H1 (cell line): ENCODE measurements at regions of chr7 and their contacts with region 1.

Region 1: GRCh38 chr7:141654551-141654950 is 47.4 kb downstream of the DENND11 start:
- DNase-seq: peak in 1 of 2 experiments; percentile 46
- H3K4me3 ChIP-seq: no peak overlapping the region
- H3K27ac ChIP-seq: no peak overlapping the region
- H3K4me1 ChIP-seq: peaks cover 0 to 4% (median under 1%) of the 10 kb centered on the region in 4 experiments; a peak in 4 of 7 replicates
- H3K27me3 ChIP-seq: no peaks in the 10 kb centered on the region
- CTCF ChIP-seq: peak; percentile 55 to 89 (median 77)
- EP300 ChIP-seq: no peak
- POLR2A ChIP-seq: no peak
- RAD21 ChIP-seq: peak; percentile 78 to 84

Region 2: GRCh38 chr7:141276031-141276430 is 378.5 kb before region 1 on chr7:
- CTCF ChIA-PET with region 1: interaction called, 15 read pairs
- POLR2A ChIA-PET with region 1: no interaction called
- DNase-seq: no peak
- H3K4me3 ChIP-seq: no peak overlapping the region
- H3K27ac ChIP-seq: no peak overlapping the region
- H3K4me1 ChIP-seq: no peaks in the 10 kb centered on the region; a peak in 1 of 7 replicates
- H3K27me3 ChIP-seq: no peaks in the 10 kb centered on the region
- CTCF ChIP-seq: no peak
- EP300 ChIP-seq: no peak
- POLR2A ChIP-seq: no peak
- RAD21 ChIP-seq: no peak

Region 3: GRCh38 chr7:141533149-141533949 is 121.2 kb before region 1 on chr7:
- CTCF ChIA-PET with region 1: interaction called, 54 read pairs
- POLR2A ChIA-PET with region 1: no interaction called
- DNase-seq: peak in 1 of 2 experiments; percentile 79
- H3K4me3 ChIP-seq: no peak overlapping the region
- H3K27ac ChIP-seq: no peak overlapping the region; the same call in 1 of the 2 replicates
- H3K4me1 ChIP-seq: no peaks in the 10 kb centered on the region
- H3K27me3 ChIP-seq: no peaks in the 10 kb centered on the region
- CTCF ChIP-seq: peak; percentile 76 to 93 (median 88)
- EP300 ChIP-seq: no peak
- POLR2A ChIP-seq: no peak
- RAD21 ChIP-seq: peak; percentile 97 to 98

Region 4: GRCh38 chr7:141541375-141541774 is 113.2 kb before region 1 on chr7:
- CTCF ChIA-PET with region 1: interaction called, 54 read pairs
- POLR2A ChIA-PET with region 1: no interaction called
- DNase-seq: no peak
- H3K4me3 ChIP-seq: no peak overlapping the region
- H3K27ac ChIP-seq: no peak overlapping the region
- H3K4me1 ChIP-seq: peaks cover 0 to 8% (median 4%) of the 10 kb centered on the region in 4 experiments; a peak in 4 of 7 replicates
- H3K27me3 ChIP-seq: no peaks in the 10 kb centered on the region
- CTCF ChIP-seq: no peak
- EP300 ChIP-seq: no peak
- POLR2A ChIP-seq: no peak
- RAD21 ChIP-seq: no peak

Region 5: GRCh38 chr7:141551094-141551781 is 103.3 kb before region 1 on chr7 and contains the start of gene AGK:
- CTCF ChIA-PET with region 1: interaction called, 19 read pairs
- POLR2A ChIA-PET with region 1: interaction called, 4 read pairs
- DNase-seq: peak; percentile 43 to 88
- H3K4me3 ChIP-seq: peak within 1 kb of the TSS; percentile 63 to 86 (median 72)
- H3K27ac ChIP-seq: peak within 1 kb of the TSS; percentile 3; the same call in 1 of the 2 replicates
- H3K4me1 ChIP-seq: peaks cover 3 to 5% (median 5%) of the 10 kb centered on the region in 4 experiments; a peak in 6 of 7 replicates
- H3K27me3 ChIP-seq: no peaks in the 10 kb centered on the region
- CTCF ChIP-seq: no peak
- EP300 ChIP-seq: peak in 1 of 2 experiments; percentile 78; a peak in 1 of 3 replicates
- POLR2A ChIP-seq: peak; percentile 53 to 89
- RAD21 ChIP-seq: no peak; a peak in 1 of 4 replicates
- total RNA-seq, gene AGK: 30.0 and 34.0 TPM in 2 replicates

Region 6: GRCh38 chr7:141674702-141675101 is 20.2 kb after region 1 on chr7:
- CTCF ChIA-PET with region 1: interaction called, 51 read pairs
- POLR2A ChIA-PET with region 1: interaction called, 3 read pairs
- DNase-seq: peak; percentile 39 to 71
- H3K4me3 ChIP-seq: no peak overlapping the region
- H3K27ac ChIP-seq: no peak overlapping the region
- H3K4me1 ChIP-seq: no peaks in the 10 kb centered on the region; a peak in 1 of 7 replicates
- H3K27me3 ChIP-seq: no peaks in the 10 kb centered on the region
- CTCF ChIP-seq: peak; percentile 74 to 82 (median 76)
- EP300 ChIP-seq: no peak
- POLR2A ChIP-seq: no peak
- RAD21 ChIP-seq: peak; percentile 75 to 77

Region 7: GRCh38 chr7:141710301-141710700 is 55.8 kb after region 1 on chr7:
- CTCF ChIA-PET with region 1: interaction called, 15 read pairs
- POLR2A ChIA-PET with region 1: no interaction called
- DNase-seq: no peak
- H3K4me3 ChIP-seq: no peak overlapping the region
- H3K27ac ChIP-seq: no peak overlapping the region
- H3K4me1 ChIP-seq: peaks cover 0 to 8% (median 0%) of the 10 kb centered on the region in 4 experiments; a peak in 1 of 7 replicates
- H3K27me3 ChIP-seq: no peaks in the 10 kb centered on the region
- CTCF ChIP-seq: no peak
- EP300 ChIP-seq: no peak
- POLR2A ChIP-seq: no peak
- RAD21 ChIP-seq: no peak

Region 8: GRCh38 chr7:141960687-141961422 is 306.3 kb after region 1 on chr7:
- CTCF ChIA-PET with region 1: no interaction called
- POLR2A ChIA-PET with region 1: no interaction called
- DNase-seq: no peak
- H3K4me3 ChIP-seq: no peak overlapping the region
- H3K27ac ChIP-seq: no peak overlapping the region
- H3K4me1 ChIP-seq: no peaks in the 10 kb centered on the region
- H3K27me3 ChIP-seq: no peaks in the 10 kb centered on the region
- CTCF ChIP-seq: no peak
- EP300 ChIP-seq: no peak
- POLR2A ChIP-seq: no peak
- RAD21 ChIP-seq: no peak